ENCODE measurements at regions of chr10 and their contacts with region 1.

Region 1: GRCh38 chr10:127872871-127873600 is 19.7 kb downstream of the CLRN3 start:
- DNase-seq: peak; percentile 65 to 68
- H3K4me3 ChIP-seq: no peak overlapping the region
- H3K4me3 Mint-ChIP-seq: no peak overlapping the region
- H3K27ac Mint-ChIP-seq: no peak overlapping the region
- H3K4me1 ChIP-seq: 0 out of 2 replicates have a peak, but pooled peaks cover 6% of the 10 kb centered on the region
- H3K4me1 Mint-ChIP-seq: peaks cover 6% of the 10 kb centered on the region
- H3K27me3 ChIP-seq: no peaks in the 10 kb centered on the region
- H3K27me3 Mint-ChIP-seq: no peaks in the 10 kb centered on the region
- CTCF ChIP-seq: peak; percentile 53 to 74

Region 2: GRCh38 chr10:127906548-127907377 is 33.7 kb after region 1 on chr10 and contains the start of gene PTPRE:
- CTCF ChIA-PET with region 1: no interaction called
- POLR2A ChIA-PET with region 1: no interaction called
- intact Hi-C with region 1: loop called (anchors 1 kb)
- DNase-seq: peak; percentile 56 to 86
- H3K4me3 ChIP-seq: peak within 1 kb of the TSS; percentile 54
- H3K4me3 Mint-ChIP-seq: peak within 1 kb of the TSS; percentile 30
- H3K27ac Mint-ChIP-seq: no peak within 1 kb of the TSS
- H3K4me1 ChIP-seq: peaks cover 23% of the 10 kb centered on the region
- H3K4me1 Mint-ChIP-seq: peaks cover 9% of the 10 kb centered on the region
- H3K27me3 ChIP-seq: no peaks in the 10 kb centered on the region
- H3K27me3 Mint-ChIP-seq: peaks cover 11% of the 10 kb centered on the region
- CTCF ChIP-seq: peak; percentile 39 to 89
- total RNA-seq, gene PTPRE: 0.46 and 0.50 TPM in 2 replicates

Region 3: DNA sequence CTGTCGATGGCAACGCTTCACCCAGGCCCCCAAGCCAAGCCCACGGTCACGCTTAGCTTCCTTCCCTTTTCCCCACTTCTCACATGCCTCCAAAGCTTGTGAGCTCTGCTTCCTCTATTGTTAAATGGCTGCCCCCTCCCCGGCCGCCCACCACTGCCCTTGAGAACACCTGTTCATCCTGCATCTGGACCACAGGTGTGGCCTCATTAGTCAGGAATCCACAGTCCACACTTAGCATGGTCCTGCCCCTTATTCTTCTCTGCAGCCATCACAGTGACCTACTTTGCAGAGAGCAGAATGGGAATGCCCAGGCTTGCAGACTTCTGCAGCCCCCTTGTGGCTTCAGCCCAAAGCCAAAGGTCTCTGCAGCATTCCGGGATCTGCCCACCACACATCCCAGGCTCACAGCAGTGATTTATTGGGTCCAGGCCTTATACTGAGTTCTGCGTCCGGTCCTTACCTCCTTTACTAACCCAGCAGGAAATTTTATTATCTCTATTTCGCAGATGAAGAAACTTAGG is 100.8 kb after region 1 on chr10:
- CTCF ChIA-PET with region 1: no interaction called
- POLR2A ChIA-PET with region 1: no interaction called
- intact Hi-C with region 1: loop called (anchors 1 kb)
- DNase-seq: peak in 1 of 2 experiments; percentile 23
- H3K4me3 ChIP-seq: no peak overlapping the region
- H3K4me3 Mint-ChIP-seq: no peak overlapping the region
- H3K27ac Mint-ChIP-seq: no peak overlapping the region
- H3K4me1 ChIP-seq: no peaks in the 10 kb centered on the region
- H3K4me1 Mint-ChIP-seq: no peaks in the 10 kb centered on the region
- H3K27me3 ChIP-seq: no peaks in the 10 kb centered on the region
- H3K27me3 Mint-ChIP-seq: peaks cover 13% of the 10 kb centered on the region
- CTCF ChIP-seq: peak in 1 of 2 experiments; percentile 63

Region 4: GRCh38 chr10:128011175-128011979 is 138.3 kb after region 1 on chr10:
- CTCF ChIA-PET with region 1: interaction called, 7 read pairs
- POLR2A ChIA-PET with region 1: no interaction called
- intact Hi-C with region 1: loop called (anchors 1 kb)
- DNase-seq: peak; percentile 71 to 90
- H3K4me3 ChIP-seq: no peak overlapping the region
- H3K4me3 Mint-ChIP-seq: no peak overlapping the region
- H3K27ac Mint-ChIP-seq: no peak overlapping the region
- H3K4me1 ChIP-seq: no peaks in the 10 kb centered on the region
- H3K4me1 Mint-ChIP-seq: no peaks in the 10 kb centered on the region
- H3K27me3 ChIP-seq: peaks cover 2% of the 10 kb centered on the region
- H3K27me3 Mint-ChIP-seq: no peaks in the 10 kb centered on the region
- CTCF ChIP-seq: peak; percentile 95 to 98

Measured in Caco-2 (cell line).